Common myeloid progenitor, CD34-positive (primary cell): ENCODE measurements at regions of chr10 and their contacts with region 1.

Region 1: GRCh38 chr10:103845972-103846371 is 9.4 kb downstream of the SH3PXD2A start:
- DNase-seq: peak; percentile 47 to 83 (median 79)
- H3K4me3 ChIP-seq: peak overlapping the region in 2 of 7 experiments; percentile 30 to 43
- H3K27ac ChIP-seq: no peak overlapping the region
- H3K4me1 ChIP-seq: peaks cover 4 to 50% (median 18%) of the 10 kb centered on the region in 4 experiments
- H3K27me3 ChIP-seq: no peaks in the 10 kb centered on the region

Region 2: DNA sequence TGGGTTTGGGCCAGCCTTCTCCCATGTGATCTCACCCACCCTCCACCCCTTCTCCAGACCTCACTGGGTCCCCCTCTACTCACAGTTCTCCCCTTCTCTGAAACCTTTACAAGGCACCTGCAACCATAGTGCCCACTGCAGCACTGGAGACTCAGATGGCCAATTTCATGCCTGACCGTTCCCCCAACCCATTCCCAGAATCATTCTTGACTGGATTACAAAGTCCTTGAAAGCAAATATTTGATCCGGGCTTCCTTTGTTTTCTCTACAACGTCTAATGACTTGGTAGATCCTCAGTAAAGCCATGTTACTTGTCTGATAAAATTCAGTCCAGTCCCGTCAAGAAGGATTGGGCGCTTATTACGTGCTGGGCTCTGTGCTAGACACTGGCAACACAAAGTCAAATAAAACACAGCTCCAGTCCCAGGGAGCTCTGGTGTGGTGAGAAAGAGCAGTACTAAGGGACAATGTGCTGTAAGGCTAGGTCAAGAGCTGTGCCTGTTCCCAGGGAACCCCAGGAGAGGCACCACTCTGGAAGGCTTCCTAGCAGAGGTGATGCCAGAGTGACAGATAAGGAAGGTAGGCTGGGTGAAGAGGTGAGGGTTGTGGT is 27.1 kb before region 1 on chr10:
- CTCF ChIA-PET with region 1: interaction called, 10 read pairs
- POLR2A ChIA-PET with region 1: no interaction called
- DNase-seq: no peak
- H3K4me3 ChIP-seq: no peak overlapping the region
- H3K27ac ChIP-seq: no peak overlapping the region
- H3K4me1 ChIP-seq: peaks cover 0 to 22% (median 9%) of the 10 kb centered on the region in 4 experiments
- H3K27me3 ChIP-seq: no peaks in the 10 kb centered on the region

Region 3: DNA sequence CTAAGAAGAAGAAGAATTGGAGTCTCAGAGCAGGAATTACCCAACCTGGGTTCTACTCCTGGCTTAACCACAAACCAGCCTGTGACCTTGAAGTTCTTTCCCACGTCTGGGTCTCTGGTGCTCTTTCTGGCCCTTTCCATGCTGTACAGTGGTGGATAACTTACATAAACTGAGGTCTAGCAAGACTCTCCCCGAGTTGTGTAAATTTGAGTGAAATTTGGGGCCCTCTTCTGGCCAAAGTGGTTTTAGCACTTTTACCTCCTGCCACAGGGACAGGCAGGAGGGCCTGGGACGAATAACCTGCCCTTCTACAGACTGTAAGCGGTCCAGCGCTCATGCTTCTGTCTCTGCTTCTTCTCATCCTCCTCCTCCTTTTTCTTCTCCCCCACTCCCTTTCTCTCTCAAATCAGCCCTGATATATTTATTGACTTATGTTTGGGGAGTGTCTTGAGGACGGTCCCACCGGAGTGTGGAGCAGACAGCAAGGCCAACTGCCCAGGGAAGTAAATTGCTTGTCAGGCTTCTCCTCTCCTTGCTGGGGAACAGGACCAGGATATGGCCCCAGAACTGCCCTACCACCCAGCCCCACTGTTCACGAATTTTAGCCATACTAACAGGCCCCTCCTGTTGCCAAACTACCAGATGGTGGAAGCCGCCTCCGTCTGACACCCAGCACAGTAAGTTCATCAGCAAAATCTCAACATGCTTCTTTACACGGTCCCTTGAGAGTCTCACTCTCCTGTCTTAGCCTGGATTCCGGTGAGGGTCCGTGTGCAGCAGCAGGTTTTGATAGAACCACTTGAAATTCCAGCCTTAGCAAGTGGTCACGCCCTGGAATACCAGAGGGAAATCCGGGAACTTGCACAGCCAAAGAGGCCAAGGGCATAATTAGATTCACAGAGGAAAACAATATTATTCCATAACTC is 13.5 kb after region 1 on chr10:
- CTCF ChIA-PET with region 1: interaction called, 13 read pairs
- POLR2A ChIA-PET with region 1: no interaction called
- DNase-seq: peak; percentile 56 to 77 (median 65)
- H3K4me3 ChIP-seq: no peak overlapping the region
- H3K27ac ChIP-seq: no peak overlapping the region
- H3K4me1 ChIP-seq: peaks cover 0 to 20% (median 13%) of the 10 kb centered on the region in 4 experiments
- H3K27me3 ChIP-seq: peaks cover 0 to 18% (median 0%) of the 10 kb centered on the region in 5 experiments